Breast epithelium (tissue), 4 donors: ENCODE measurements at regions of chr4 and their contacts with region 1.

Region 1: DNA sequence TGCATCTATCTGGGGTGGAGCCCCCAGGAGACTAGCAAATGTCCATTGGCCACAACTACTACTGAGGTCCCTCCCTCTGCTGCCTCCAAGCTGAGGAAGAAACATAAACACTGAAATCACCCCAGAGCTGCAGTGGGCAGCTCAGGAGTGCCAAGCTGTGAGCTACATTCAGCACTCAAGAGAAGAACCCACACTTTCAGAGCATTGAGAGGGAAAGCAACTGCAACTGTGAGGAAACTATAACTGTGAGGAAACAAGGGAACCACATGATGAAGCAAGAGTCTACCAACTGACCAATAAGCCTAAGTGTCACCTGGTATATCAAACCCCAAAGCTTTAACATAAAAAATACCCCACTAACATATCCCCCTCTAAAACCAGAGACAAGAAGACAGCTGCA is 373.5 kb upstream of the TACR3 start:
- DNase-seq: no peak
- H3K4me3 ChIP-seq: no peak overlapping the region
- H3K27ac ChIP-seq: no peak overlapping the region
- H3K4me1 ChIP-seq: no peaks in the 10 kb centered on the region
- H3K27me3 ChIP-seq: no peaks in the 10 kb centered on the region
- CTCF ChIP-seq: no peak
- POLR2A ChIP-seq: no peak

Region 2: GRCh38 chr4:104559502-104559901 is 466.3 kb after region 1 on chr4:
- intact Hi-C with region 1: loop called (anchors 10 kb)
- DNase-seq: no peak
- H3K4me3 ChIP-seq: no peak overlapping the region
- H3K27ac ChIP-seq: no peak overlapping the region
- H3K4me1 ChIP-seq: no peaks in the 10 kb centered on the region
- H3K27me3 ChIP-seq: no peaks in the 10 kb centered on the region
- CTCF ChIP-seq: no peak
- POLR2A ChIP-seq: no peak